Esophagus squamous epithelium (tissue), 5 donors: ENCODE measurements at regions of chr4 and their contacts with region 1.

Region 1: GRCh38 chr4:68375667-68376559 is 26.0 kb upstream of the YTHDC1 start:
- DNase-seq: no peak
- H3K4me3 ChIP-seq: peak overlapping the region in 3 of 4 donors; percentile 16 to 54 (median 27)
- H3K27ac ChIP-seq: no peak overlapping the region
- H3K4me1 ChIP-seq: peaks cover 0 to 16% (median 0%) of the 10 kb centered on the region in 3 donors
- H3K27me3 ChIP-seq: peaks cover 0 to 29% (median 0%) of the 10 kb centered on the region in 4 donors
- CTCF ChIP-seq: peak; percentile 39 to 93 (median 82)
- POLR2A ChIP-seq: no peak

Region 2: GRCh38 chr4:68278029-68278428 is 97.9 kb before region 1 on chr4:
- intact Hi-C with region 1: loop called (anchors 5 kb)
- DNase-seq: no peak
- H3K4me3 ChIP-seq: no peak overlapping the region
- H3K27ac ChIP-seq: no peak overlapping the region
- H3K4me1 ChIP-seq: peaks cover 0 to 12% (median 0%) of the 10 kb centered on the region in 3 donors
- H3K27me3 ChIP-seq: peaks cover 0 to 4% (median 0%) of the 10 kb centered on the region in 4 donors
- CTCF ChIP-seq: no peak
- POLR2A ChIP-seq: no peak